WTC11 (cell line): ENCODE measurements at regions of chr20 and their contacts with region 1.

Region 1: DNA sequence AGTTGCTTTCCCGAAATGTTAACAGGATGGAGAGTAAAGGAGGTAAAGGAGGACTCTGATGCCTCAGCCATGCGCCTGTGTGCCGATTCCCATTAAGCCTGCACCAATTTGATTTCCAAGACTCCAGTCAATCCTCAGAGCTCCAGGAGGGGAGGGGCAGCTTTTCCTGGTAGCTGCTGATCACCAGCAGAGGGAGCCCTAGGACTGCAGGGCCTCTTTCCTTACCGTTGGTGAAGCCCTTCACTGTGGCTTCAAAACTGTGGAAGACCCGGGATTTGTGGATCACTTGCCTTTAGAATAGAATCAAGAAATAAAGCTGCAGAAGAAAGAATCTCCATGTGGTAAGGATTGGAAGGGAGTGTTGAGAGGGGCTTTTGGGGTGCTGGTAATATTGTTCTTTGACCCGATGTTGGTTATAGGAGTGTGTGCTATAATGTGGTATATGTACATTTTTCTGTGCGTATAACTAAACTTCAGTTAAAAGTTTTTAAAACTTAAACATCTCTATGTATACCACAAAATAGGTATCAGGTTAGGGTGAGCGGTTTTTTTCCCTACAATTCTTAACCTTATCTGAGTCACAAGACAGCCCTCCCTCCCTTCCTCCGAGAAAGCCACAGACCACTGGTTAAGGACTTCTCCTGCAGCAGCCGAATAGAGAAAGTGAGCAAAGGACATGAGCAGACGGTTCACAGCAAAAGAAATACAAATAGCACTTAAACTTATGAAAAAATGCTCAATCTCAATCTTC is 6.9 kb upstream of the OSER1 start:
- DNase-seq: peak; percentile 82
- ATAC-seq: peak; percentile 84
- H3K4me3 Mint-ChIP-seq: no peak overlapping the region
- H3K27ac Mint-ChIP-seq: peak overlapping the region; percentile 58; the same call in 1 of the 2 replicates
- H3K4me1 Mint-ChIP-seq: peaks cover 21% of the 10 kb centered on the region
- H3K27me3 Mint-ChIP-seq: no peaks in the 10 kb centered on the region
- CTCF ChIP-seq: peak; percentile 91

Region 2: DNA sequence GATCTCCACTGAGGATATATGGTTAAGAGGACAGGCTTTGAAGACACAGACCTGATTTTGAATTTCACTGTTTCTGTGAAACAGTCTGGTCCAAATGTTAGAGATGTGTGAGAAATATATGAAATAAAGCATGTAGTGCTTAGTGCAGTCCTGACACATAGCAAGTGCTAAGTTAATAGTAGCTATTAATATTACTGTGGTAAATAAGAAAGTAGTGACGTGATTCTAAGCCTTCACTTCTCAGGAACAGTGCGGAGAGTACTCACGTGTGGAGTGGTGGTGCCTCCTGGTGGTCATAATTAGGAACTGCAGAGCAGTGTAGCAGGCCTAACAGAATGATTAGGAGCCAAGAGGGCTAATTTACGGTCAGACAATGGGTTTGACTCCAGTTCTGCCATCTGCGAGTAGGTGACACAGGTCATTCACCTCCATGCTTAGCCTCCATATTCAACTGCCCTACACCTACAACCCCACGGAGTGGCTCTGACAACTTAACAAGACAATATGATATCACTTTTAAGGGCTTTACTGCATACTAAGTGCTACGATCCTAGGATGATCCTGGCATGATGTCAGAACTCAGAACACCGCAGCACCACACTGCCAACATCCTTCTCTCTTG is 136.8 kb before region 1 on chr20:
- CTCF ChIA-PET with region 1: no interaction called
- POLR2A ChIA-PET with region 1: no interaction called
- DNase-seq: peak; percentile 74
- ATAC-seq: peak; percentile 95
- H3K4me3 Mint-ChIP-seq: no peak overlapping the region
- H3K27ac Mint-ChIP-seq: no peak overlapping the region
- H3K4me1 Mint-ChIP-seq: no peaks in the 10 kb centered on the region
- H3K27me3 Mint-ChIP-seq: no peaks in the 10 kb centered on the region
- CTCF ChIP-seq: peak; percentile 98

Region 3: GRCh38 chr20:44231713-44232468 is 14.4 kb after region 1 on chr20:
- CTCF ChIA-PET with region 1: interaction called, 45 read pairs
- POLR2A ChIA-PET with region 1: no interaction called
- DNase-seq: peak; percentile 46
- ATAC-seq: peak; percentile 75
- H3K4me3 Mint-ChIP-seq: no peak overlapping the region
- H3K27ac Mint-ChIP-seq: peak overlapping the region; percentile 79; the same call in 1 of the 2 replicates
- H3K4me1 Mint-ChIP-seq: peaks cover 19% of the 10 kb centered on the region
- H3K27me3 Mint-ChIP-seq: no peaks in the 10 kb centered on the region
- CTCF ChIP-seq: no peak

Region 4: DNA sequence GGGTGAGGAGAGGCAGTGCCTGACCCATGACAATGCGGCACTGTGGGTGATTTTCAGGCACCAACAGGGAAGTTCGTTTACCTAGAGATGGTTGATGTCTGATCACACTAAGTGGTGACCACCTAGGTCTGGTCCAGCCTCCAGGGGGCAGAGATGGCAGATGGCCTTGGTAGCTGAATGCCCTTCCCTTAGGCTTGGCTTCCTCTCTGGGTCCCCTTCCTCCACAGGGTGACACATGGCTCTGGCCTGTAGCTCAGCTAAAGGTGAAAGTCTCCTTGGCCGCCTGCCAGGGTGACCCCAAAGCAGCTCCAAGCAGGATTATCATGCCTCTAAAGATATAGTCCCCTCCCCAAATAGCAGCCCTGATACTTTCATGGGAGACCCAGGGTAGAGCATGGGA is 36.0 kb after region 1 on chr20:
- CTCF ChIA-PET with region 1: interaction called, 22 read pairs
- POLR2A ChIA-PET with region 1: no interaction called
- DNase-seq: peak; percentile 22
- ATAC-seq: peak; percentile 82
- H3K4me3 Mint-ChIP-seq: no peak overlapping the region
- H3K27ac Mint-ChIP-seq: no peak overlapping the region
- H3K4me1 Mint-ChIP-seq: peaks cover 6% of the 10 kb centered on the region
- H3K27me3 Mint-ChIP-seq: no peaks in the 10 kb centered on the region
- CTCF ChIP-seq: no peak

Region 5: GRCh38 chr20:44310664-44311639 is 93.4 kb after region 1 on chr20 and contains the start of gene FITM2:
- CTCF ChIA-PET with region 1: interaction called, 85 read pairs
- POLR2A ChIA-PET with region 1: no interaction called
- DNase-seq: peak; percentile 98
- ATAC-seq: peak; percentile 94
- H3K4me3 Mint-ChIP-seq: peak within 1 kb of the TSS; percentile 81
- H3K27ac Mint-ChIP-seq: no peak within 1 kb of the TSS
- H3K4me1 Mint-ChIP-seq: peaks cover 10% of the 10 kb centered on the region
- H3K27me3 Mint-ChIP-seq: peaks cover 32% of the 10 kb centered on the region
- CTCF ChIP-seq: peak; percentile 69
- total RNA-seq, gene FITM2: 2.0 to 2.5 TPM (median 2.4 TPM) in 3 replicates

Region 6: GRCh38 chr20:44475694-44476560 is 258.4 kb after region 1 on chr20 and contains the start of gene TTPAL:
- CTCF ChIA-PET with region 1: interaction called, 17 read pairs
- POLR2A ChIA-PET with region 1: no interaction called
- DNase-seq: peak; percentile 90
- ATAC-seq: peak; percentile 96
- H3K4me3 Mint-ChIP-seq: peak within 1 kb of the TSS; percentile 90
- H3K27ac Mint-ChIP-seq: peak within 1 kb of the TSS; percentile 92
- H3K4me1 Mint-ChIP-seq: peaks cover 14% of the 10 kb centered on the region
- H3K27me3 Mint-ChIP-seq: peaks cover 2% of the 10 kb centered on the region
- CTCF ChIP-seq: no peak
- total RNA-seq, gene TTPAL: 10.3 to 16.5 TPM (median 13.7 TPM) in 3 replicates